Activated T-helper 1 cell treated with anti-CD3 and anti-CD28 coated beads, Interleukin-12 subunit alpha, Interleukin-12 subunit beta, Interleukin-2, Interleukin-4 antibody, amounts not matched to agents 30 ng/mL and 10 ng/mL and 1 ng/mL, durations not matched to agents 14 hours and 24 hours and 36 hours (primary cell): ENCODE measurements at regions of chrX and their contacts with region 1.

Region 1: DNA sequence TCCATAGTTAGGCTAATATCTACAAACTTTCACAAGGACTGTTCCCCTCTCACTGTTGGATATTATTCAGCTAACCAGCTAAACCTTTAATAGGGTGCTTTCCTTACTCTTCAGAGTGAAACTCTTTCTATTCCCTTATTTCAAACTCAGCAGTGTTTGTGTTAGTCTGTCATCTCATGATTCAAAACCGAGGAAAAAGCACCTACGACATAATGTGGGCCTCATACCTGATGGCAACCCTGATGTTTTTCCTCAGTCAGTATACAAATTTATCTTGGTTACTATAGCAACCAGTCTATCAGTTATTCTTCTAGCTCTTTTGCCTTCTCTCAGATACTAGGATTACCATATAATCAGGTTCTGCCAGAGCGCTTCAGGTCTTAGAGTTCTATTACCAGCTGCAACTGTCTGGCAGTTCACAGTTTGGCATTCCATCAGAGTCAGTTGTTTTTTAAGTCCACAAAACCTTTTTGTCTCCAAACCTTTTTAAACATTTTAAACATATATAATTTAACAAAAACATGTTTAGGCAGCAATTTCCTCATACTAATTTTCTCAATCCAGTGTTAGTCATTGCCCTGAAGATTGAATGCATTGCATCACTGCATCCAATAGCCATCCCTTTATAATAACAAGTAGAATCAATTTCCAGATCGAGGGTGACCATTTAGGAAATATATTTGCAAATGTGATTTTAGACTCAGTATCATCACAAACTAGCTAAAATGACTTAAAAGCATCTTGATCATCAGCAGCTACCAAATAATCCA is 7.4 kb downstream of the WDR44 start:
- DNase-seq: no peak
- H3K4me3 Mint-ChIP-seq: no peak overlapping the region
- H3K27ac Mint-ChIP-seq: peak overlapping the region; percentile 44
- H3K4me1 Mint-ChIP-seq: peaks cover 43% of the 10 kb centered on the region
- H3K27me3 Mint-ChIP-seq: no peaks in the 10 kb centered on the region

Region 2: GRCh38 chrX:118392716-118393115 is 39.5 kb after region 1 on chrX:
- intact Hi-C with region 1: loop called (anchors 1 kb)
- DNase-seq: no peak
- H3K4me3 Mint-ChIP-seq: no peak overlapping the region
- H3K27ac Mint-ChIP-seq: no peak overlapping the region
- H3K4me1 Mint-ChIP-seq: peaks cover 16% of the 10 kb centered on the region
- H3K27me3 Mint-ChIP-seq: no peaks in the 10 kb centered on the region